MCF 10A (cell line): ENCODE measurements at regions of chr2 and their contacts with region 1.

Region 1: DNA sequence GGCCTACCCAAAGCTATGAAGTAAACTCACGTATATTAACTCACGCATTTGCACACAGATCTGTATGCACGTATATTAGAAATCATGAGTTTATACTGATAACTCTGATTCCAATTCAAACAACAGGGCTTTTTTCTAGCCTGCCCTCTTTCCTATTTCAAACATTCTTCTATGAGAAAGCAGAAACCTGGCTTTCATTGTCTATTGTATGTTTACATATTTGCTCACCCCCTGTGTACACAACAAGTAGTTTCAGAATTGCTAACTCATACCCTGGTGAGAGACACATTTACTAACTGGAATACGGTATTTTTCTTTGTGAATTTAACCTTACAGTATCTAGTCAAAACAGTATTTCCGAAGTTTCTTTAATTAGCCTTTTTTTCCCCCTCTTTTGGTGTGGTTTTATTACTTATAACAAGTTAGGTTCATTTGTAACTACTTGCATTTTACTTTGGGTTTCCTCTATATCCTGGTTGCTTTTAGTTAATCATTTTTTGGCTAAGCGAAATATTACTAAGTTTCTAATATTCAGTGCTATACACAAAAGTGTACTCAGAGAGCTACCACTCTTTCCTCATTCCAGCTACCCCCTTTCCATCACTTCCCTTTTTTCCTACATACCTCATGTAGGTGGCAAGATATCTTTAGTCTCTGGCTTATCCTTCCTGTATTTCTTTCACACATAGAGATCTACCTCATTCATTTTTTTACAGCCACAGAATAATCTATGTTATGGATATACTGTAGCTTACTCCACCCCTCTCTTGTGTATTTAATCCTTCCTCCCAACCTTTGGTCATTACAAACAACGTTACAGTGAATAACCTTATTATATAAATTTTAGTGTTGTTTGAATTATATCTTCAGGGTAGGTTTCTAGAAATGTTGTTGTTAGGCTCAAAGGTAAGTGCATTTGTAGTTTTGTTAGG is 112.7 kb upstream of the BCL2L11 start:
- DNase-seq: no peak
- H3K4me3 Mint-ChIP-seq: no peak overlapping the region
- H3K27ac Mint-ChIP-seq: no peak overlapping the region
- H3K4me1 Mint-ChIP-seq: no peaks in the 10 kb centered on the region
- H3K27me3 Mint-ChIP-seq: peaks cover 39% of the 10 kb centered on the region
- CTCF ChIP-seq: no peak

Region 2: DNA sequence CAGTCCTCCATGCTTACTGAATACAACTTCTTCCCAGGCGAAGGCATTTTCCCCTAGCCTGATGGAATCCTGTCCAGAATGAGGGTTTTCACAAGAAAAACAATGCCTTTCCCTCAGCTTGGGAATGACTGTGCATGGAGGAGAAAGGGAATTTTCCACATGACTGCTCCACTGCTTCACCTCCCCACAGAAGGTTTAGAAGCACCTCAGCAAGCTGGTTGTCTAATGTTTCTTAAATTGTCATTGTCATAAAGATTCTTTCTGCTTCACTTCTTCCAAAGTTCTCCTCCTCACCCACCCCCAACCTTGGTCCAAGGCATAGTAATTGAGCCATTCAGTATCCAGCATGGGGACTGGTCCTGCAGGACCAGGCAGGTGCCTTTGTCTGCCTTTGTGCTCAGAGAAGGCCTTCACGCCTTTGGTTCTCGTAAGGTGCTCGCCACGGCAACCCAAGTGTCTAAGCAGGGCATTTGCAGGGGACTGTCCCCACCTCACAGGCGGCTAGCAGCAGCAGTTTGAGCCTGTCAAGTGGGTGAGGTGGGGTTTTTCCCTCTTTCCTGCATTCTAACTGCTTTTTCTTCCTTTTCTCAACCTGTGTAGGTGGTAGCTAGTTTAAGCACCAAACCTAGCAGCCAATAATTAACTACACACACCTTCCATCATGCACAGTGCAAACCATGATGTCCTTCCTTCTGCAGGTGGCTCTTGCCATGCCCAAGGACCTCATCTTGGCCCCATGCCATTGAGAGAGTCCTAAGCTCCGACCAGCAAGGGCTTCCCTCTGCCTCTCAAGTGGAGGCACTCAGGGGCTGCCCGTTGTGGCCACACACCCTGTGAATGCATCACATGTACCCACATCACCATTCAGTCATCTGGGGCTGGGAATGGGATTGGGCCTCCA is 47.0 kb after region 1 on chr2:
- CTCF ChIA-PET with region 1: interaction called, 3 read pairs
- POLR2A ChIA-PET with region 1: no interaction called
- intact Hi-C with region 1: loop called (anchors 5 kb)
- DNase-seq: no peak
- H3K4me3 Mint-ChIP-seq: no peak overlapping the region
- H3K27ac Mint-ChIP-seq: no peak overlapping the region
- H3K4me1 Mint-ChIP-seq: no peaks in the 10 kb centered on the region
- H3K27me3 Mint-ChIP-seq: peaks cover 79% of the 10 kb centered on the region
- CTCF ChIP-seq: no peak